Ascending aorta (tissue), 2 donors: ENCODE measurements at regions of chr10 and their contacts with region 1.

Region 1: GRCh38 chr10:100912605-100913469 is at the start of gene SLF2:
- DNase-seq: peak; percentile 92 to 99
- H3K4me3 ChIP-seq: peak within 1 kb of the TSS; percentile 84 to 89
- H3K27ac ChIP-seq: peak within 1 kb of the TSS; percentile 89 to 90
- H3K4me1 ChIP-seq: peaks cover 5 to 20% of the 10 kb centered on the region in 2 donors
- H3K27me3 ChIP-seq: no peaks in the 10 kb centered on the region
- CTCF ChIP-seq: no peak
- total RNA-seq, gene SLF2: 3.1 TPM

Region 2: DNA sequence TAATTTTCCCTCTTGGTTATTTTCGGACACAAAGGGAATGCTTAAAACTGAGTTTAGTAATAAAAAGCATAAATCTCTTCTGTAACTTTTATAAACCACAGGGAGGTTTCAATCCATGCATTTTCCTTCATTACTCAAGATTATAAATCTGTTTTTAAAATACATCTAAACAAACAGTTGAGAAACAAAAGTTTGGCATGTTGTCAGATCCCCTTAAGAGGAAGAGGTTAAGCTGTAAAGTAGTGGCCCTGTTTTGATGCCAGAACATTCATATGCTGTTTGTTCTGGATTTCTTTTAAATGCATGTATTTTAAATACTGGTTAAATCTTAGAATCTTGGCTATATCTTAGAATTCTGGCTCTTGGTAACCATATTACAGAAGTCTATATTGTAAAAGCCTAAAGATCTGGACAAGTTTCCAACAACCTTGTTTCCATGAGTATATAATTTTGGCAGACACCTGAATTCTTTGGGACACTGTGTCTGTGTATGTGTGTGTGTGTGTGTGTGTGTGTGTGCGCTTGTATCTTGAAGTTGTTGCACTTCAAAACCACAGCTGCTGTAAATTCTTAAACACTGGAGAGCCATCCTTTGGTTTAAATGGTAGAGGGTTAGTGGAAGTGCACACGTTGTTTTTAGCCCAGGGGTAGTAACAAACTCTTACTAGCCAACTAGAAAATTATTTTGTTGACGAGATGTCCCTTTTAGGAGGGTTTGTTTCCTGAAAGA is 49.7 kb after region 1 on chr10:
- intact Hi-C with region 1: no loop called
- DNase-seq: no peak
- H3K4me3 ChIP-seq: no peak overlapping the region
- H3K27ac ChIP-seq: no peak overlapping the region
- H3K4me1 ChIP-seq: no peaks in the 10 kb centered on the region
- H3K27me3 ChIP-seq: no peaks in the 10 kb centered on the region
- CTCF ChIP-seq: no peak

Region 3: DNA sequence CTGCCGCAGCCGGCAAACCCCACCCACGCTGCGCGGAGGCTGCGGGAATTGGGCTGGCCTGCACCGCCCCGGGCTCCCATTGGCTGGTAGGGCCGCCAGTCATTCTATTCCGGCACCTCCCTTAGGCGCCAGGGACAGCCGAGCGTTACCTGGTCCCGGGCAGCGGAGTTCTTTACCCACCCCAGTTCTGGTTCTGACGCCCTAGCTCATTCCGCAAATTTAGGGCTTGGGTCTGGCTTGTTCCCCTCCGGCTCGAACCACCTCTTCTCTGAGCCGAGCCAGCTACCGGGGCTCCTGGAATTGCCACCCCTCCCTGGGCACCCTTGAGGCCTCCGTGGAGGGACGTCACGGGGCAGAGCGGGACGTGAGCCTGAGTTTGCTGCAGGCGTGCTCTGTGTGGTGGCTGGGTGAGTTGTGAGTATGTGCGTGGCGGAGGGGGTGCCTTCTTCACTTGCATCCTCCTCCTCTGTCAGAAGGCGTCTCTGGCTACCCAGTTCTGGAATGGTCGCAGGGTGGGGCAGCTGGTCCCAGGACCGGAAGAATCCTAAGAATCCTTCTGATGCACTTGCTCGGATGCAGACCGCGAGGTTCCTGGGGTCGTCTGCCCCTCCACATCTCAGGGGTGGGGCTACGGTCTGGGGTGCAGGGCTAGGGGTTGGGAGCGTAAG is 118.4 kb after region 1 on chr10 and contains the starts of genes PDZD7 and SFXN3:
- intact Hi-C with region 1: loop called (anchors 10 kb)
- DNase-seq: peak; percentile 80 to 97
- H3K4me3 ChIP-seq: peak within 1 kb of the TSS; percentile 72 to 92
- H3K27ac ChIP-seq: peak within 1 kb of the TSS; percentile 99
- H3K4me1 ChIP-seq: peaks cover 20 to 30% of the 10 kb centered on the region in 2 donors
- H3K27me3 ChIP-seq: no peaks in the 10 kb centered on the region
- CTCF ChIP-seq: no peak
- total RNA-seq, gene PDZD7: 0.53 TPM
- total RNA-seq, gene SFXN3: 72.4 TPM

Region 4: GRCh38 chr10:101587725-101588653 is 675.2 kb after region 1 on chr10 and contains the starts of genes DPCD and POLL:
- intact Hi-C with region 1: loop called (anchors 5 kb)
- DNase-seq: peak; percentile 80 to 98
- H3K4me3 ChIP-seq: peak within 1 kb of the TSS; percentile 93 to 97
- H3K27ac ChIP-seq: peak within 1 kb of the TSS; percentile 54 to 63
- H3K4me1 ChIP-seq: peaks cover 7 to 16% of the 10 kb centered on the region in 2 donors
- H3K27me3 ChIP-seq: no peaks in the 10 kb centered on the region
- CTCF ChIP-seq: no peak
- total RNA-seq, gene DPCD: 1.3 TPM
- total RNA-seq, gene POLL: 17.1 TPM